A549 (cell line): ENCODE measurements at regions of chr15 and their contacts with region 1.

Region 1: GRCh38 chr15:70875001-70875782 is 17.0 kb downstream of the THAP10 start:
- DNase-seq: peak in 1 of 2 experiments; percentile 42
- ATAC-seq: peak; percentile 83 to 88; a peak in 4 of 6 replicates
- H3K4me3 ChIP-seq: no peak overlapping the region
- H3K27ac ChIP-seq: peak overlapping the region in 1 of 2 experiments; percentile 15; a peak in 3 of 6 replicates
- H3K4me1 ChIP-seq: peaks cover 7% of the 10 kb centered on the region; the same call in 2 of the 3 replicates
- CTCF ChIP-seq: peak; percentile 97
- EP300 ChIP-seq: no peak
- POLR2A ChIP-seq: no peak
- RAD21 ChIP-seq: peak; percentile 95

Region 2: GRCh38 chr15:70679919-70680231 is 195.3 kb before region 1 on chr15:
- CTCF ChIA-PET with region 1: interaction called, 50 read pairs
- POLR2A ChIA-PET with region 1: no interaction called
- DNase-seq: no peak
- ATAC-seq: no peak
- H3K4me3 ChIP-seq: no peak overlapping the region
- H3K27ac ChIP-seq: no peak overlapping the region
- H3K4me1 ChIP-seq: no peaks in the 10 kb centered on the region
- CTCF ChIP-seq: no peak
- EP300 ChIP-seq: no peak
- POLR2A ChIP-seq: no peak
- RAD21 ChIP-seq: no peak

Region 3: GRCh38 chr15:70833897-70834765 is 41.1 kb before region 1 on chr15:
- CTCF ChIA-PET with region 1: interaction called, 331 read pairs
- POLR2A ChIA-PET with region 1: no interaction called
- DNase-seq: peak; percentile 73 to 77
- ATAC-seq: peak; percentile 47 to 80; a peak in 4 of 6 replicates
- H3K4me3 ChIP-seq: no peak overlapping the region
- H3K27ac ChIP-seq: peak overlapping the region; percentile 70 to 85
- H3K4me1 ChIP-seq: peaks cover 40% of the 10 kb centered on the region
- CTCF ChIP-seq: no peak
- EP300 ChIP-seq: peak; percentile 23 to 29; a peak in 2 of 5 replicates
- POLR2A ChIP-seq: no peak
- RAD21 ChIP-seq: no peak

Region 4: DNA sequence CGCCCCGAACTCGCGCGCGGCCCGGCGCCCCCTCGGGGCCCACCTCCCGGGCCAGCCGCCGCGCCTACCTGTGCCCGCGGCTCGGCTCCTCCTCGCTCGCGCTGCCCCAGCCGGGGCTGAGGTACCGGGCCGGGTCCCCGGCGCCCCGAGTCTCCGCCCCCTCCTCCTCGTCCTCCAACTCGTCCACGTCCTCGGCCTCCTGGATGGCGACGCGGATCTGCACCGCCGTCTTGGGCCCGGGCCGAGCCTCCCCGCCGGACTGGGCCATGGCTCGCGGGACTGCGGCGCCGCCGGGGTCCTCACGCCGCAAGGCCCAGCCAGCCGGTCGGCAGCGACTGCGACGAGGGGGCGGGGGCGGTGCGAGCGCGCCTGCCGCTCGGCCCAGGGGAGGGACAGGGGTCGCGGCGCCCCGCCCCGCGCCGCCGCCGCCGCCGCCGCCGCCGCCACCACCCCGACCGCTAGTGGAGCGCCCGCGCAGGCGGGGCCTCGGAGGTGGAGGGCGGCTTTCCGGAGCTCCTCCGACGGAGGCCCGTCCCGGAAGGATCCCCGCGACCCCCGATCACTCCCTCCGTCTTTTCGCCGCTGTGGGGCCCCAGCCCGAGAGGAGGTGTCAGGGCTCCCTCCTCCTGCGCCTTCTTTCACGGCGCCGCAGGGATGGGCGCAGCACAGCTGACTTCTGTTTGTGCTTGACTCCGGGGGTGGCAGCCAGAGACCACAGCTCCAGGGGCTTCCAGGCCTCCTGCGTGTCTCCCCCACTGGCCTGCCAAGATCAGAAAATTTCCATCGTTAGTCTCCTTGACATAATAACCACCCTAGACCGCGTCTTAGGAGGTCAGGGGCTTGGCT is 21.1 kb before region 1 on chr15 and contains the start of gene LARP6:
- CTCF ChIA-PET with region 1: interaction called, 300 read pairs
- POLR2A ChIA-PET with region 1: interaction called, 17 read pairs
- DNase-seq: peak; percentile 52 to 59
- ATAC-seq: peak; percentile 75 to 81
- H3K4me3 ChIP-seq: peak within 1 kb of the TSS; percentile 74
- H3K27ac ChIP-seq: peak within 1 kb of the TSS; percentile 89 to 93
- H3K4me1 ChIP-seq: peaks cover 41% of the 10 kb centered on the region
- CTCF ChIP-seq: no peak
- EP300 ChIP-seq: no peak
- POLR2A ChIP-seq: peak; percentile 71
- RAD21 ChIP-seq: no peak
- polyA plus RNA-seq, gene LARP6: 120 and 158 TPM in 2 replicates

Region 5: GRCh38 chr15:71203586-71204474 is 328.6 kb after region 1 on chr15:
- CTCF ChIA-PET with region 1: no interaction called
- POLR2A ChIA-PET with region 1: no interaction called
- DNase-seq: no peak
- ATAC-seq: no peak
- H3K4me3 ChIP-seq: no peak overlapping the region
- H3K27ac ChIP-seq: peak overlapping the region in 1 of 2 experiments; percentile 23; a peak in 1 of 6 replicates
- H3K4me1 ChIP-seq: peaks cover 25% of the 10 kb centered on the region
- CTCF ChIP-seq: no peak
- EP300 ChIP-seq: no peak
- POLR2A ChIP-seq: no peak
- RAD21 ChIP-seq: no peak